Activated B cell treated with CpG ODN at 0.5 μM for 24 hours (primary cell): ENCODE measurements at regions of chr17 and their contacts with region 1.

Region 1: DNA sequence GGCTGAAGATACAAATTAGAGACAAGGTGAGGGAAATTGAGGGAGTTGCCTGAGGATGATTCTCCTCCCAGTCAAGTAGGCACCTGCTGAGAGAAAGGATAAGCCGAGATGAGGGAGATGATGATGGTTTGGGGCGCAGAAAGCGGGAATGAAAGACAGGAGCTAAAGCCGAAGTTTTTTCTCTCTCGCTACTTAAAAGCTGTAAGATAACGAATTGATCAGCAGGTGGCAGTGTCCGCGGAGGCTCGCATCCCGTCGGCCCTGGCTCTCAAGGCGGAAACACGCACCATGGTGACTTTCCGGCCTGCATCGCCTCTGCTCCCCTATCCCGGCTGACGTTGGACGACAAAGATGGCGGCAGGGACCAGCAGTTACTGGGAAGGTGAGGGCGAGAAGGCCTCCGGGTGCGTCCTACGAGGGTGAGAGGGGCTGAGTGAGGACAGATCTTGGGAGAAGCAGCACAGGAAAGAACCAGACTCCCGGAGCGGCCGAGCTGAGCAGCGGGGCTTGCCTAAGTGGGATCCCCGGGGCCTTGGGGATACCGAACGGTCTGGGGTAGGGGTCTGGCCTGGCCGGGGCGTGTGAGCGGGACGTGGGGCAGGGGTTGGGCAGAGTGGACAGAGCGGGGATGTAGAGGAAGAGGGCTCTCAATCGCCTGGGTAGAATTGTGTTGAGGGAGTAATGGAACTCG is at the start of gene GOSR1:
- DNase-seq: peak; percentile 79
- ATAC-seq: peak; percentile 99
- H3K4me3 Mint-ChIP-seq: peak within 1 kb of the TSS; percentile 97
- H3K27ac Mint-ChIP-seq: peak within 1 kb of the TSS; percentile 97
- H3K4me1 Mint-ChIP-seq: peaks cover 30% of the 10 kb centered on the region
- H3K27me3 Mint-ChIP-seq: no peaks in the 10 kb centered on the region
- CTCF ChIP-seq: no peak
- total RNA-seq, gene GOSR1: 59.9 and 60.7 TPM in 2 replicates

Region 2: DNA sequence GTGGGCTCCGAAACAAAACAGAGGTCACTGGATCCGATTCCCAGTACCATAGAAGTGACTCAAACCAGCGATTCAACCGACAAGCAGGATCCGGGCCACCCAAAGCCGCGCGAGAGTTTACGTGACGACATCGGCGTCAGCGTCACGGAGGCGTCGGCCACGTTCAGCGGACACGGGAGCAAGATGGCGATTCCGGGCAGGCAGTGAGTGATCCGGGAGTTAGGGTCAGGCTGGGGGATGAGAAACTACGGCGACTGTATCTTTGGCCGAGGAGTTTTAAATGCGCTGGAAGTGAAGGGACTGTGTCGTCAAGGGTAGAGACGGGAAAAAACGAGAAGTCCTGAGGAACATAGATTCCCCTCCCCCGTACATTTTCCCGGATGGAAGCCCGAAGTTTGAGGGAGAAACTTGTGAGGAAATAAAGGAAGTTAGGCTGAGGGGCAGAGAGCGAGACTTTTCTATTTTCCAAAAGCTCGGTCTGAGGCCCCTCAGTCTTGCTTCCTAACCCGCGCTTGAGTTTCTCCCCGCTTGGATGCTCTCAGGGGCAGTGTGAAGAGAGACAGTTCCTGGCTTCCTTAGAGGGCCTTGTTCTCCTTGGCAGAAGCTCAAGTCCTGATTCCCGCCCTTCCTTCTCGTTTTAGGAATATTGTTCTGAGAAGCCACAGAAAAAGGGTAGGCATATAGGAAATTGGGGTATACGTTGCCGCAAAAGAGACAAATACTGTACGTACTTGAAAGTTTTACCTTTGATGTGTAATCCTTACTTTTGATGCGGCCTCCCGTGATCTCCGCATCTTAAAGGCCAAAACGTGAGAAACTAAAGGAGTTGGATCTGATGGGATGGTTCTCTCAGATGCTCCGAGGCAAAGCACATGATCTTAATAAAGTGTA is 360.3 kb before region 1 on chr17 and contains the start of gene NSRP1:
- CTCF ChIA-PET with region 1: no interaction called
- POLR2A ChIA-PET with region 1: interaction called, 10 read pairs
- intact Hi-C with region 1: no loop called
- DNase-seq: peak; percentile 84
- ATAC-seq: peak; percentile 96
- H3K4me3 Mint-ChIP-seq: peak within 1 kb of the TSS; percentile 97
- H3K27ac Mint-ChIP-seq: peak within 1 kb of the TSS; percentile 97
- H3K4me1 Mint-ChIP-seq: peaks cover 41% of the 10 kb centered on the region
- H3K27me3 Mint-ChIP-seq: no peaks in the 10 kb centered on the region
- CTCF ChIP-seq: no peak
- total RNA-seq, gene NSRP1: 35.3 and 44.2 TPM in 2 replicates

Region 3: GRCh38 chr17:30554839-30555751 is 77.9 kb after region 1 on chr17:
- CTCF ChIA-PET with region 1: interaction called, 5 read pairs
- POLR2A ChIA-PET with region 1: no interaction called
- intact Hi-C with region 1: loop called (anchors 1 kb)
- DNase-seq: peak; percentile 13
- ATAC-seq: no peak
- H3K4me3 Mint-ChIP-seq: no peak overlapping the region
- H3K27ac Mint-ChIP-seq: no peak overlapping the region
- H3K4me1 Mint-ChIP-seq: peaks cover 30% of the 10 kb centered on the region
- H3K27me3 Mint-ChIP-seq: no peaks in the 10 kb centered on the region
- CTCF ChIP-seq: no peak

Region 4: GRCh38 chr17:30716461-30717300 is 239.5 kb after region 1 on chr17:
- CTCF ChIA-PET with region 1: no interaction called
- POLR2A ChIA-PET with region 1: interaction called, 3 read pairs
- intact Hi-C with region 1: loop called (anchors 5 kb)
- DNase-seq: no peak
- ATAC-seq: no peak
- H3K4me3 Mint-ChIP-seq: no peak overlapping the region
- H3K27ac Mint-ChIP-seq: no peak overlapping the region
- H3K4me1 Mint-ChIP-seq: peaks cover 11% of the 10 kb centered on the region
- H3K27me3 Mint-ChIP-seq: no peaks in the 10 kb centered on the region
- CTCF ChIP-seq: no peak

Region 5: DNA sequence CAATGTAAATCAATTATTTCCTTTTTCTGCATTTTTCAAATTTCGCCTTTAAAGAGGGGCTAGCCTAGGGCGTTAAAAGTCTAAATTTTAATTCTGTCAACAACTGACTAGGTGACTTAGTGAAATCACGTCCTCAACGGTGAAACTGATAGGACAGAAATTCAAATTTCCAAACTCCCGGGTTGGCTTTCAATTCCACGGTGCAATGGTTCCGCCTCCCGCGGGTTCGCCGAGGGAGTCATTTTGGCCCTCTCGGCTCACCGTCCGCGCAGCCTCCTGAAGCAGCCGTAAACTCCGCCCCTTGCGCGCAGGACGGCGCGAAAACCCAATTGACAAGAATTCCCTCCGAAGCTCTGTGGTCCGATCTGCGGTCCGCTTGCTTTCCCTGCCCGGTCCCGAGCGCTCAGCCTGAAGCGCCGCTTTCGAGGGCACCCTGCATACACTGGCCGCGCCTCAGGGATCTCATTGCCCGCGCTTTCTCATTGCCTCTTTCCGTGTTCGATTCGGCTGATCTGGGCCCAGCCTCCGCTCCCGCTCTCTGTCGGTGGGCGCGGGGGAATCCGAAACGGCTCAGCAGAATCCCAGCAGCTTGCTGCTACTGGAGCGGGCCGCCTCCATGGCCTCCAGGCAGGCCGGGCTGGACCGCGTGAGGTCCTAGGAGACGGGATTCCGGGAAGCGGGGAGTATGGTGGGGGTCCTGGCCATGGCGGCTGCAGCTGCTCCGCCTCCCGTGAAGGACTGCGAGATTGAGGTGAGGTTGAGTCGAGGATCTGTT is 354.6 kb after region 1 on chr17 and contains the start of gene ATAD5:
- CTCF ChIA-PET with region 1: no interaction called
- POLR2A ChIA-PET with region 1: interaction called, 4 read pairs
- intact Hi-C with region 1: loop called (anchors 1 kb)
- DNase-seq: peak; percentile 84
- ATAC-seq: peak; percentile 97
- H3K4me3 Mint-ChIP-seq: peak within 1 kb of the TSS; percentile 97
- H3K27ac Mint-ChIP-seq: peak within 1 kb of the TSS; percentile 91
- H3K4me1 Mint-ChIP-seq: peaks cover 23% of the 10 kb centered on the region
- H3K27me3 Mint-ChIP-seq: no peaks in the 10 kb centered on the region
- CTCF ChIP-seq: no peak
- total RNA-seq, gene ATAD5: 6.6 and 8.7 TPM in 2 replicates